ENCODE measurements at regions of chr3 and their contacts with region 1.

Region 1: GRCh38 chr3:42961633-42962032 is 17.5 kb upstream of the GASK1A start:
- DNase-seq: peak in 1 of 2 donors; percentile 10
- ATAC-seq: peak; percentile 90 to 91
- H3K4me3 ChIP-seq: no peak overlapping the region
- H3K27ac ChIP-seq: no peak overlapping the region
- H3K4me1 ChIP-seq: no peaks in the 10 kb centered on the region
- H3K27me3 ChIP-seq: no peaks in the 10 kb centered on the region
- CTCF ChIP-seq: peak; percentile 55 to 77 (median 66)
- POLR2A ChIP-seq: no peak

Region 2: GRCh38 chr3:43071313-43071893 is 109.8 kb after region 1 on chr3:
- in situ Hi-C with region 1: loop called in 1 of 4 experiments (anchors 25 kb)
- intact Hi-C with region 1: loop called (anchors 2 kb)
- DNase-seq: no peak
- ATAC-seq: peak in 1 of 2 donors; percentile 61
- H3K4me3 ChIP-seq: no peak overlapping the region
- H3K27ac ChIP-seq: no peak overlapping the region
- H3K4me1 ChIP-seq: no peaks in the 10 kb centered on the region
- H3K27me3 ChIP-seq: no peaks in the 10 kb centered on the region
- CTCF ChIP-seq: peak; percentile 36 to 63 (median 44)
- POLR2A ChIP-seq: no peak

Region 3: DNA sequence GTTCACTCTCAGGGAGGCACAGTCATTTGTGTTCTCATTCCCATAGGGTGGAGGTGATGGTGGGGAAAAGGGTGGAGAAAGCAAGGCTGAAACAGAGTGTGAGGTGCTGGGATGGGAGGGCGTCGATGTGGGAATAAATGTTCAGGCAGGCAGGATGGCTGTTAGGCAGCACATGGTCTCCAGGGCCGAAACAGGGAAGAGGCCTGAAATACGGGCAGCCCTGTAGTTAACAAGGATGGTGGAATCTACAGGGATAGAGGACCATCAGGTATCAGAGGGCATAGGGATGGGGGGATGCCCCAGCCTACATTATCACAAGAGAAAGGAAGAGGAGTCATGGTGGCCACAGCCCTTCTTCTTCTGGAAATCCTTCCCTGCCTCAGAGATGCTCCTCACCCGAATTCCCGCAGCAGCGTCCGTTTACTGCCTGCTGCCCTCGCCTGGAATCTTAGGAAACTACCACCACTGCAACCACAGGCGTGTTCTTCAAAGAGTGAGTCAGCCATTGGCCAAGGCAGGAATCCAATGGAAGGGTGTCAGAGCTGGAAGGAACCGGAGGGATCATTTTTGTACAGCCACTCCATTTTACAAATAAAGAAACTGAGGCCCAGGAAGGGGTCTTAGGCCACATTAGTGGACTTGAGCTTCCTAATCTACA is 194.0 kb after region 1 on chr3:
- in situ Hi-C with region 1: loop called (anchors 5 to 25 kb)
- intact Hi-C with region 1: loop called (anchors 2 kb)
- DNase-seq: peak; percentile 34 to 57
- ATAC-seq: peak in 1 of 2 donors; percentile 80
- H3K4me3 ChIP-seq: no peak overlapping the region
- H3K27ac ChIP-seq: no peak overlapping the region
- H3K4me1 ChIP-seq: peaks cover 0 to 5% of the 10 kb centered on the region in 2 donors
- H3K27me3 ChIP-seq: no peaks in the 10 kb centered on the region
- CTCF ChIP-seq: peak in 3 of 5 experiments; percentile 31 to 47 (median 36)
- POLR2A ChIP-seq: no peak

Region 4: GRCh38 chr3:43503067-43503728 is 541.6 kb after region 1 on chr3:
- in situ Hi-C with region 1: loop called in 3 of 4 experiments (anchors 25 kb)
- intact Hi-C with region 1: loop called (anchors 5 kb)
- DNase-seq: no peak
- ATAC-seq: peak in 1 of 2 donors; percentile 77
- H3K4me3 ChIP-seq: no peak overlapping the region
- H3K27ac ChIP-seq: no peak overlapping the region
- H3K4me1 ChIP-seq: no peaks in the 10 kb centered on the region
- H3K27me3 ChIP-seq: no peaks in the 10 kb centered on the region
- CTCF ChIP-seq: peak; percentile 26 to 71 (median 48)
- POLR2A ChIP-seq: no peak

Region 5: GRCh38 chr3:44198284-44199269 is 1236.9 kb after region 1 on chr3:
- in situ Hi-C with region 1: loop called in 1 of 4 experiments (anchors 25 kb)
- intact Hi-C with region 1: no loop called
- DNase-seq: peak; percentile 36 to 39
- ATAC-seq: peak; percentile 80 to 82
- H3K4me3 ChIP-seq: no peak overlapping the region
- H3K27ac ChIP-seq: no peak overlapping the region
- H3K4me1 ChIP-seq: no peaks in the 10 kb centered on the region
- H3K27me3 ChIP-seq: no peaks in the 10 kb centered on the region
- CTCF ChIP-seq: peak; percentile 43 to 82 (median 71)
- POLR2A ChIP-seq: no peak

Measured in gastrocnemius medialis (tissue), 4 donors.